PC-3 (cell line): ENCODE measurements at regions of chr1 and their contacts with region 1.

Region 1: DNA sequence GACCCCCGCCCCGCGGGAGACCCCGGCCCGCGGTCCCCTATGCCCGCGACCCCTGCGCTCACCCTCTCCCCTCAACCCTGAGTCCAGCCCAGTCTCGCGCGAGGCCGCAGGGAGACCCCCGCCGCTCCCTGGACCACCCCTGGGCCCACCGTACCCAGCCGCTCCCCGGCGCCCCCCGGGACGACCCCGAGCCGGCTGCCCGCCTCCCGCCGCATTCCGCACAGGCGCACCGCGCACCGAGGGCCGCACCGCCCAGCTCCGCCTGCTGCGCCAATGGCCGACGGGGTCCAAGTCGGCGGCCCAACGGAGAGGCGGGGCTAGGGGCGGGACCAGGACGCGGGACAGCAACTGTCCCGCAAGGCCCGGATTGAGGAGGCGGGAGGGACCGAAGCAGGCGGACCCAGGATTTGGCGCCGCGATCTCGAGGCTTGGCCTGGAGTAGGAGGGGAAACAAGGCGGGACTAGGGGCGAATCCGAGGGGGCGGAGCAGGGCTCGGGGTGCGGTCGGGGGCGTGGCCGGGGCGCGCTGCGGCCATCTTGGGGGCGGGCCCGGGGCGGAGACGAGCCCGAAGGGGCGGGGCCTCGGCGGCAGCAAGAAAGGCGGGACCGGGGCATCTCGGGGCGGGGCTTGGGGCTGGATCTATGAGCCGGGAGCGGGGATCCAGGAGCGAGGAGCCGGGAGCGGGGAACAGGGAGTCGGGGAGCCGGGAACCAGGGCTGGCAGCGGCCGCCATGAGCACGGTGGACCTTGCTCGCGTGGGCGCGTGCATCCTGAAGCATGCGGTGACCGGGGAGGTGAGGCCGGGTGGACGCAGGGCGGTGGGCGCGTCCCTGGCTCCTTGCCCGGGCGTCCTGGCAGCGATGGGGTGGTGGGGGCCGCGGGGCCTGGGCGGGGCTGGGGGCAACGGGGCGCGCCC is at the start of gene PRXL2B:
- DNase-seq: peak; percentile 99
- ATAC-seq: peak; percentile 84
- H3K4me3 ChIP-seq: peak within 1 kb of the TSS; percentile 96
- H3K27ac ChIP-seq: peak within 1 kb of the TSS; percentile 26
- H3K4me1 ChIP-seq: peaks cover 14% of the 10 kb centered on the region
- H3K27me3 ChIP-seq: no peaks in the 10 kb centered on the region
- CTCF ChIP-seq: no peak
- total RNA-seq, gene PRXL2B: 75.0 and 85.0 TPM in 2 replicates

Region 2: GRCh38 chr1:2227346-2228153 is 358.9 kb before region 1 on chr1:
- CTCF ChIA-PET with region 1: no interaction called
- POLR2A ChIA-PET with region 1: interaction called, 12 read pairs
- intact Hi-C with region 1: no loop called
- DNase-seq: peak; percentile 99
- ATAC-seq: peak; percentile 85
- H3K4me3 ChIP-seq: peak overlapping the region; percentile 79
- H3K27ac ChIP-seq: peak overlapping the region; percentile 60
- H3K4me1 ChIP-seq: peaks cover 20% of the 10 kb centered on the region
- H3K27me3 ChIP-seq: no peaks in the 10 kb centered on the region
- CTCF ChIP-seq: no peak

Region 3: DNA sequence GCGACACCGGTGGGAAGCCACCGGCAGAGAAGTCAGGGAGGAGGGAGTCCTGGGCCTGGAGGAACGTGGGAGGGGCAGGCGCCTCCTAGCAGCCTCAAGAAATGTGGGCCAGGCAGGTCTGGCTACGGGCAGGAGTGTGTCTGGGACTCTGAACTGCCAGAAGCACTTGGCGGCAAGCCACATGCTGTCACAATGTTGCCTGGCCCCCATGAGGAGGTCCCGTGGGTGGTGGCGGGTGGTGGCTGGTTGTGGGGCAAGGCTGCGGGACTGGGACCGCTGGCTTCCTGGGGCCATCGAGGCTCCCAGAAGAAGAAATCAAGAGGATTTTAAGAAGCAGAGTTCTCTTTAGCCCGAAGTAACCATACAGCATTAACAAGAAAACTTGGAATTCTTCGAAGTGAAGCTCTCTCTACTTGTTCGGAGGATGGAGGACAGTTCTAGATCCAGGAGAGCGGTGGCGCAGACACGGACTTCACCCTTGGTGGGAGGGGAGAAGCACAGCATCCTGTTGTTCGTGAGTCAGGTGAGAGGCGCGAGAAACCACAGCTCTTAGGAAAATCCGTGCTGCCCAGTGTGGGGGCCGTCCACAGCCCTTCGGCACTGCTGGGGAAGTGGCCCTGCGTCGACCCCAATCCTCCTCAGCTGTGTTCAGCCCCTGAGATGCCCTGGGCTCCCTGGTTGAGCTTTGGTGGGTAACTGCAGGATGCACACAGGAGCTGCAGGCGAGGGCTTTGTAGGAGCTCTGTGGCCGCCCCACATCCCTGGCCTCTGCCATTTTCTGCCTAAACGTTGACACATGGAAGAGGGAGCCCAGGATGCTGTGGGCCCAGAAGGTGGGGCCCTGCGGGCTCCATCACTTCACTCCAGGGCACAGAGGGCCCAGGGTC is 345.9 kb before region 1 on chr1:
- CTCF ChIA-PET with region 1: no interaction called
- POLR2A ChIA-PET with region 1: no interaction called
- intact Hi-C with region 1: no loop called
- DNase-seq: no peak
- ATAC-seq: no peak
- H3K4me3 ChIP-seq: no peak overlapping the region
- H3K27ac ChIP-seq: no peak overlapping the region
- H3K4me1 ChIP-seq: peaks cover 2% of the 10 kb centered on the region
- H3K27me3 ChIP-seq: no peaks in the 10 kb centered on the region
- CTCF ChIP-seq: no peak

Region 4: DNA sequence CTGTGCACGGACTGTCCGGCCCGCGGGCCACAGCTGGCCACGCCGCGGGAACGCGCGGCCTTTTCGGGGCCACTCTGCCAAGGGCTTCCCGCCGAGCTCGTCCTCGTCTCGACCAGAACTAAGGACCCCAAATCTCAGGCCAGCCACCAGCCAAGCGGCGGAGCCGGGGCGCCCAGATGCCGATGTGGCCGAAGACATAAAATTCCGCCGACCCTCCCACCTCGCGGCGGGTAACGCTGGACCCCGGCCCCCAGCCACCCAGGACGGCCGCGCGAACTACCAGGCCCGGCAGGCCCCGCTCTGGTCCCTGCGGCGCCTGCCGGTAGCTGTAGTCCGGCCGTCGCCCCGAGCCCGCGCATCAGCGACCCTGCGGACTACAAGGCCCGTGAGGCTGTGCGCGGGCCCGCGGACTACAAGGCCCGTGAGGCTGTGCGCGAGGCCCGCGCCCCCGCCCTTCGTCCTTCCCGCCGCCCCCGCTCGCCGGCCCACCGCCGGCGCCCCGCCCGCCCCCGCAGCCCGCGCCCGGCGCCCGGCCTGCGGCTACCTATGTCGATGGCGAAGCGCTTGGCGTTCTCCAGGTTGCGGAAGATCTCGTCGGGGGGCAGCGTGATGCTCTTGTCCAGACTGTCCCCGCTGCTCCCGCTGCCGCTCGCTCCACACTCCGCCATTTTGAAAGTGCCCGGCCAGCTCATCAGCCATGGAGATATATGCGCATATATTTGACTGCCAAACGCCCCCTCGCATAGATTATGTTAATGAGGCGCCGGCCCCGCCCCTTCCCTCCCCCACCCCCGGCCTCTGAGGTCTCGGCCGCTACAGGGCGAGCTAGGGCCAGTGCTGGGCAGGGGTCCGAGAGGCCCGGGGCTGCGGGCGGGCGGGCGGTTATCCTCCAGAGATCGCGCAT is 60.2 kb before region 1 on chr1 and contains the start of gene PANK4:
- CTCF ChIA-PET with region 1: no interaction called
- POLR2A ChIA-PET with region 1: no interaction called
- intact Hi-C with region 1: no loop called
- DNase-seq: peak; percentile 98
- ATAC-seq: peak; percentile 92
- H3K4me3 ChIP-seq: peak within 1 kb of the TSS; percentile 93
- H3K27ac ChIP-seq: peak within 1 kb of the TSS; percentile 43
- H3K4me1 ChIP-seq: peaks cover 43% of the 10 kb centered on the region
- H3K27me3 ChIP-seq: no peaks in the 10 kb centered on the region
- CTCF ChIP-seq: no peak
- total RNA-seq, gene PANK4: 69.4 and 86.9 TPM in 2 replicates

Region 5: DNA sequence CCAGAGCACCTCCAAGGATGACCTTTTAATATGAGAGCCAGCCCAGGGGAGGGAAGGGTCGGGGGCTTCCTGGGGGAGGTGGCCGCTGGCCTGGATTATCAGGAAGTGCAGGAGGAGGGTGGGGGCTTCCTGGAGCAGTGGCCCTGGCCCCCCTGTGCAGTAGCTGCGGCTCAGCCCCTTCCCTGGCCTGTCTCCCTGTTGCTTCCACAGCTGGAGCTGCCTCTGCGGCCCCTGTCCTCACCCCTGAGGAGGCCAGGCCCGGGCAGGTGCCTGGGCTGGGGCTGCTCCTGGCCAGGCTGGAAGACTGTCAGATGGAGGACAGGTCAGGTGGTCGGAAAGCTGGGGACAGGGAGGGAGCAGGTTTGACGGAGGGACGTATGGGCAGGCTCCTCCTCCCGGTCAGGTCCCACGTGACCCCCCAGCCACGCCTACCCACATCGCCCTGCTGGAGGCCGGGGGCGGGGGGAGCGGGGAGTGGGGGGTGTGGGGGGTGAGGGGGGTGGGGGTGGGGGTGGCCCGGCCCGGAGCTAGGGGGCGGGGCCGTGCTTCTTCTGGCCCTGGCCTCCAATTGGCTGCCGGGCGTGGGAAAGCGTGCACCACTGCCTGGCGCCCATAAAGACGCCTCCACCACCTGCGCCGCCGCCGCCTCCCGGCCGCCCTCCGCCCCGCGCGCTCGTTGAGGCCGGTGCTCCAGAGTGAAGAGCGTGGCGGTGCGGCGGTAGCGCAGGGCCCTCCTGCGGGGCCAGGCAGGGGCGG is 40.5 kb before region 1 on chr1:
- CTCF ChIA-PET with region 1: no interaction called
- POLR2A ChIA-PET with region 1: no interaction called
- intact Hi-C with region 1: loop called (anchors 5 kb)
- DNase-seq: peak; percentile 95
- ATAC-seq: peak; percentile 64
- H3K4me3 ChIP-seq: peak overlapping the region; percentile 69
- H3K27ac ChIP-seq: peak overlapping the region; percentile 64
- H3K4me1 ChIP-seq: peaks cover 22% of the 10 kb centered on the region
- H3K27me3 ChIP-seq: no peaks in the 10 kb centered on the region
- CTCF ChIP-seq: no peak

Region 6: DNA sequence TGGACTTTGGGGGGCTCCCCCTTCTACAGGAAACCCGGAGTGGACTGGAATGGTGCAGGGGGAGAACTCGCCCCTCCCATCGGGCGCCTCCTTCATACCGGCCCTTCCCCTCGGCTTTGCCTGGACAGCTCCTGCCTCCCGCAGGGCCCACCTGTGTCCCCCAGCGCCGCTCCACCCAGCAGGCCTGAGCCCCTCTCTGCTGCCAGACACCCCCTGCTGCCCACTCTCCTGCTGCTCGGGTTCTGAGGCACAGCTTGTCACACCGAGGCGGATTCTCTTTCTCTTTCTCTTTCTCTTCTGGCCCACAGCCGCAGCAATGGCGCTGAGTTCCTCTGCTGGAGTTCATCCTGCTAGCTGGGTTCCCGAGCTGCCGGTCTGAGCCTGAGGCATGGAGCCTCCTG is 30.1 kb before region 1 on chr1 and contains the start of gene TNFRSF14:
- CTCF ChIA-PET with region 1: no interaction called
- POLR2A ChIA-PET with region 1: interaction called, 28 read pairs
- intact Hi-C with region 1: no loop called
- DNase-seq: peak; percentile 51
- ATAC-seq: peak; percentile 75
- H3K4me3 ChIP-seq: peak within 1 kb of the TSS; percentile 83
- H3K27ac ChIP-seq: no peak within 1 kb of the TSS
- H3K4me1 ChIP-seq: peaks cover 15% of the 10 kb centered on the region
- H3K27me3 ChIP-seq: no peaks in the 10 kb centered on the region
- CTCF ChIP-seq: no peak
- total RNA-seq, gene TNFRSF14: 21.1 and 25.5 TPM in 2 replicates

Region 7: DNA sequence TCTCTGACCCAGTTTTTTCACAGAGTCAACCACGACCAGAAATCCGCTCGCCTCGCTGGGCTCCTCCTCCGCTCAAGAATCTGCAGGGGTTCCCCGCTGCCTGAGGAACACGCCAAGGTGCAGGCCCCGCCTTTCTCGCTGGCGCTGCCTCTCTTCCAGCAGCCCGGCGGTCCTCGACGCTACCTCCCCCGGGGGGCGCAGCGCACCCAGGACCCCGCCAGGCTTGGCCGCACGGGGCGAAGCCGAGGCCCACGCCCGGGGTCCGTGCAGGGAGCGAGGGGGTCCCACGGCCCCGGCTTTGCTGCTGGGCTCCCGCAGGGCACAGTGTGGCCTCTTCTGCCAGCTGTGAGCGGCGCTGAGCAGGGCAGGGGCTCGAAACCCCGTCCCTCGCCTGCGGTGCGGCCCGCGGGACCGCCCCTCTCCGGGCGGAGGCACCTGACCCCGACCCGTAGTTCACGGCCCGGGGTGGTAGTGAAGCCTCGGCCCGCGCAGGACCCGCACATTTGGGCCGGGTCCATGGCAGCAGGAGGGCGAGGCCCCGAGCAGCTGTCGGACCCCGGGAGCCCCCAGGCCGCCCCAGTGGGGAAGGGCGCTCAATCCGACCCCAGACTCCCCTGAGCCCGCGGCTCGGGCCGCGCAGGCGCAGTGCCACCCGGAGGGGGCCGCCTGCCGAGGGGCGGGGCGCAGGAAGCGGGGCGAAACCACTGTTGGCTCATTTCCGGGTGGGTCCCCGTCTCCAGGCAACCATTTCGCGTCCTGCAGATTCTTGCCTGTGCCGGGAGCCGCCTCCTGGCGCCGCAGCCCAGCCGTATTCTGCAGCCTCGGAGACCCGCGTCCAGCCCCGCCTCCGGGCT is 56.4 kb after region 1 on chr1:
- CTCF ChIA-PET with region 1: interaction called, 3 read pairs
- POLR2A ChIA-PET with region 1: no interaction called
- intact Hi-C with region 1: loop called (anchors 1 kb)
- DNase-seq: peak; percentile 96
- ATAC-seq: peak; percentile 84
- H3K4me3 ChIP-seq: peak overlapping the region; percentile 89
- H3K27ac ChIP-seq: 0 out of 2 replicates have a peak overlapping the region, but pooled peaks have one; percentile 13
- H3K4me1 ChIP-seq: peaks cover 8% of the 10 kb centered on the region
- H3K27me3 ChIP-seq: peaks cover 15% of the 10 kb centered on the region
- CTCF ChIP-seq: no peak

Region 8: GRCh38 chr1:3219005-3219790 is 632.8 kb after region 1 on chr1:
- CTCF ChIA-PET with region 1: no interaction called
- POLR2A ChIA-PET with region 1: interaction called, 10 read pairs
- intact Hi-C with region 1: no loop called
- DNase-seq: peak; percentile 63
- ATAC-seq: peak; percentile 80
- H3K4me3 ChIP-seq: no peak overlapping the region
- H3K27ac ChIP-seq: no peak overlapping the region
- H3K4me1 ChIP-seq: no peaks in the 10 kb centered on the region
- H3K27me3 ChIP-seq: peaks cover 98% of the 10 kb centered on the region
- CTCF ChIP-seq: no peak